ENCODE measurements at regions of chr3 and their contacts with region 1.

Region 1: GRCh38 chr3:197309528-197310361 is 11.3 kb upstream of the DLG1 start:
- DNase-seq: no peak
- H3K4me3 ChIP-seq: no peak overlapping the region
- H3K4me3 Mint-ChIP-seq: no peak overlapping the region
- H3K27ac ChIP-seq: no peak overlapping the region
- H3K27ac Mint-ChIP-seq: no peak overlapping the region
- H3K4me1 ChIP-seq: no peaks in the 10 kb centered on the region
- H3K4me1 Mint-ChIP-seq: peaks cover 3 to 10% (median 4%) of the 10 kb centered on the region in 4 donors
- H3K27me3 ChIP-seq: no peaks in the 10 kb centered on the region
- H3K27me3 Mint-ChIP-seq: peaks cover 1 to 5% of the 10 kb centered on the region in 2 donors

Region 2: GRCh38 chr3:197286678-197287077 is 23.1 kb before region 1 on chr3:
- CTCF ChIA-PET with region 1: no interaction called
- POLR2A ChIA-PET with region 1: no interaction called
- intact Hi-C with region 1: no loop called
- DNase-seq: no peak
- H3K4me3 ChIP-seq: no peak overlapping the region
- H3K4me3 Mint-ChIP-seq: no peak overlapping the region
- H3K27ac ChIP-seq: no peak overlapping the region
- H3K27ac Mint-ChIP-seq: no peak overlapping the region
- H3K4me1 ChIP-seq: peaks cover 8% of the 10 kb centered on the region
- H3K4me1 Mint-ChIP-seq: peaks cover 22 to 41% (median 33%) of the 10 kb centered on the region in 4 donors
- H3K27me3 ChIP-seq: no peaks in the 10 kb centered on the region
- H3K27me3 Mint-ChIP-seq: no peaks in the 10 kb centered on the region

Region 3: GRCh38 chr3:197380786-197381185 is 71.0 kb after region 1 on chr3:
- CTCF ChIA-PET with region 1: no interaction called
- POLR2A ChIA-PET with region 1: no interaction called
- intact Hi-C with region 1: loop called (anchors 10 kb)
- DNase-seq: no peak
- H3K4me3 ChIP-seq: no peak overlapping the region
- H3K4me3 Mint-ChIP-seq: no peak overlapping the region
- H3K27ac ChIP-seq: no peak overlapping the region
- H3K27ac Mint-ChIP-seq: no peak overlapping the region
- H3K4me1 ChIP-seq: no peaks in the 10 kb centered on the region
- H3K4me1 Mint-ChIP-seq: peaks cover 0 to 5% (median 0%) of the 10 kb centered on the region in 4 donors
- H3K27me3 ChIP-seq: no peaks in the 10 kb centered on the region
- H3K27me3 Mint-ChIP-seq: peaks cover 3 to 13% of the 10 kb centered on the region in 2 donors

Measured in CD4-positive, alpha-beta memory T cell (primary cell).